ENCODE measurements at regions of chr9 and their contacts with region 1.

Region 1: GRCh38 chr9:110152704-110153374 is 55.1 kb downstream of the C9orf152 start:
- DNase-seq: peak; percentile 27
- ATAC-seq: peak; percentile 84
- H3K4me3 ChIP-seq: no peak overlapping the region
- H3K27ac ChIP-seq: no peak overlapping the region
- H3K4me1 ChIP-seq: peaks cover 0 to 9% of the 10 kb centered on the region in 2 experiments; a peak in 2 of 4 replicates
- H3K27me3 ChIP-seq: no peaks in the 10 kb centered on the region
- CTCF ChIP-seq: peak; percentile 67 to 78 (median 75)
- POLR2A ChIP-seq: no peak
- RAD21 ChIP-seq: peak; percentile 89

Region 2: GRCh38 chr9:109387206-109387605 is 765.6 kb before region 1 on chr9:
- CTCF ChIA-PET with region 1: no interaction called
- POLR2A ChIA-PET with region 1: no interaction called
- RAD21 ChIA-PET with region 1: no interaction called
- intact Hi-C with region 1: no loop called
- DNase-seq: no peak
- ATAC-seq: no peak
- H3K4me3 ChIP-seq: no peak overlapping the region
- H3K27ac ChIP-seq: no peak overlapping the region
- H3K4me1 ChIP-seq: no peaks in the 10 kb centered on the region
- H3K27me3 ChIP-seq: no peaks in the 10 kb centered on the region
- CTCF ChIP-seq: no peak
- POLR2A ChIP-seq: no peak
- RAD21 ChIP-seq: no peak

Region 3: DNA sequence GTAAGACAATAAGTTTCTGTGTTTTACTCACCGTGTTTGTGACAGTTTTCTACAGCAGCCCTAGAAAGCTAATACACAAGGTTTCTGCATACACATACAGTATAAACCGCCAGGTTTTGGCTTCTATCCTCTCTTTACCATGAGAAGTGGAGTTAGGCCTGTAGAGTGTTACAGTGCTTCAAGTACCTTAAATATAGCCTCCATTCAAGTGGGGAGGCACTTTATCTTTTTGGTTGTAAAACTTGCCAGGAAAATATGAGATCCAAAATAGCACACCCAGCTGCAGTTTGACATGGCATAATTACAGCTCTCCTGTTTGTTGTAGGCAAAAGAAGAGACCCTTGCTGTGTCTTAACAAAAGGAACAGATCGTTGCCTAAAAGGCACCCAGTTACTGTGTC is 564.4 kb before region 1 on chr9:
- CTCF ChIA-PET with region 1: no interaction called
- POLR2A ChIA-PET with region 1: no interaction called
- RAD21 ChIA-PET with region 1: no interaction called
- intact Hi-C with region 1: loop called (anchors 5 kb)
- DNase-seq: no peak
- ATAC-seq: no peak
- H3K4me3 ChIP-seq: no peak overlapping the region
- H3K27ac ChIP-seq: no peak overlapping the region
- H3K4me1 ChIP-seq: no peaks in the 10 kb centered on the region
- H3K27me3 ChIP-seq: no peaks in the 10 kb centered on the region
- CTCF ChIP-seq: no peak
- POLR2A ChIP-seq: no peak
- RAD21 ChIP-seq: no peak

Region 4: DNA sequence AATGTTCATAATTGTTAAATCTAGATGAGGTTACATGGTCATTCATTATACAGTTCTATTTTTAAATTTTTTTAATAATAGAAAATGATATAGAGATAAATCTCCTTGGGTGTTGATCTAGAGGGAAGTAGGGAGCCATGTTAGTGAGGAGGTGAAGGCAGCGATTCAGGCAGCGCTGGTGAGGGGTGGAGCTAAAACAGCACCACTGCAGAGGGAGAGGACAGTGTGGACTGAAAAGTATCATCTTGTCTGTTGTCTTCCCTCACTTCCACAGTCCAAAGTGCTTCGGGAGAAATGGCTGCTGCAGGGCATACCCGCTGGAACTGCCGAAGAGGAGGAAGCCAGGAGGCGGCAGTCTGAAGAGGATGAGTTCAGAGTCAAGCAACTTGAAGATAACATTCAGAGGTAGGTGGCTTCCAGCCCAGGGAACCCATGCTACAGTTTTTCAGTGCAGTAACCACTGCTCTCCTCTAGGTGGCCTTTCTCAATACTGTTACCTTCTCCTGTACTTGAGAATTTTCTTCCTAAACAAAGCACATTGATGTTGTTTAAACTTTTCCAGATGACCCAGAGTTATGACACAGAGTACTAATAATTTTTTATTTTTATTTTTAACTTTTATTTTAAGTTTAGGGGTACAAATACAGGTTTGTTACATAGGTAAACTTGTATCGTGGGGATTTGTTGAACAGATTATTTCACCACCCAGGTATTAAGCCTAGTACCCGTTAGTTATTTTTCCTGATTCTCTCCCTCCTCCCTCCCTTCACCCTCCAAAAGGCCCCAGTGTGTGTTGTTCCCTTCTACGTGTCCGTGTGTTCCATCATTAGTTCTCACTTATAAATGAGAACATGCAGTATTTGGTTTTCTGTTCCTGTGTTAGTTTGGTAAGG is 272.3 kb before region 1 on chr9:
- CTCF ChIA-PET with region 1: interaction called, 11 read pairs
- POLR2A ChIA-PET with region 1: no interaction called
- RAD21 ChIA-PET with region 1: no interaction called
- intact Hi-C with region 1: no loop called
- DNase-seq: peak; percentile 67
- ATAC-seq: peak; percentile 95
- H3K4me3 ChIP-seq: peak overlapping the region; percentile 36 to 40
- H3K27ac ChIP-seq: no peak overlapping the region
- H3K4me1 ChIP-seq: peaks cover 0 to 3% of the 10 kb centered on the region in 2 experiments; a peak in 1 of 4 replicates
- H3K27me3 ChIP-seq: peaks cover 17% of the 10 kb centered on the region
- CTCF ChIP-seq: peak; percentile 39 to 84 (median 68); a peak in 5 of 6 replicates
- POLR2A ChIP-seq: no peak
- RAD21 ChIP-seq: peak; percentile 36

Region 5: GRCh38 chr9:109903515-109904138 is 249.2 kb before region 1 on chr9:
- CTCF ChIA-PET with region 1: interaction called, 19 read pairs
- POLR2A ChIA-PET with region 1: no interaction called
- RAD21 ChIA-PET with region 1: interaction called, 3 to 10 read pairs
- intact Hi-C with region 1: loop called (anchors 1 kb)
- DNase-seq: peak; percentile 76
- ATAC-seq: peak; percentile 93
- H3K4me3 ChIP-seq: no peak overlapping the region
- H3K27ac ChIP-seq: no peak overlapping the region
- H3K4me1 ChIP-seq: no peaks in the 10 kb centered on the region
- H3K27me3 ChIP-seq: no peaks in the 10 kb centered on the region
- CTCF ChIP-seq: peak; percentile 70 to 91 (median 89)
- POLR2A ChIP-seq: no peak
- RAD21 ChIP-seq: peak; percentile 97

Region 6: DNA sequence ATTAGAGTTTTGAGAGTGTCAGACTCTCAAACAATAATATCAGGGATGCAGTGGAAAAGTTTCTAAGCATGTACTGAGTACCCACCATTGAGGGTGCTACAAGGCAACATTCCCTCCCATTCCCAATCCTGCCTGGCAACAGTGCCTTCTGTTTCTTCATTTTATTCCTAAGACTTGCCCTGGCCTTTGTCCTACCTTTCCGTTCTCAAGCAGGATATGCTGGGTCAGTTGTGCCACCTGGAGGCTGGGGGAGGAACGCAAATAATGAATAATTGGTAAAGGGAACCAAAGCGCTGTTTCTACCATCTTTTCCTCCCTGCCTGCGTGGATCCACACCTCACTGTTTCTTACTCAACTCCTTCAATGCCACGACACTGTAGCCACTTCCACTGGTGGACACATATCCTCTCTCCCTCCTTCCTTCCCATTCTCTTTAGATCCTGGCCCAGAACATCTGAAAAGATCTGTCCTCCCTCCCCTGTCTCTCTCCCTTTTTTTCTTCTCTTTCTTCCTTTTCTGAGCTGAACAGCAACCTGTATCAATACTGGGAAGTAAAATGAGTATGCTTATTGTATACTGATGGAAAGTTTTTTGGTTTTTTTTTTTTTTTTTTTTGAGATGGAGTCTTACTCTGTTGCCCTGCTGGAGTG is 94.4 kb before region 1 on chr9:
- CTCF ChIA-PET with region 1: no interaction called
- POLR2A ChIA-PET with region 1: no interaction called
- RAD21 ChIA-PET with region 1: interaction called in 1 of 2 experiments, 3 read pairs
- intact Hi-C with region 1: loop called (anchors 2 kb)
- DNase-seq: peak; percentile 67
- ATAC-seq: peak; percentile 96
- H3K4me3 ChIP-seq: no peak overlapping the region
- H3K27ac ChIP-seq: no peak overlapping the region
- H3K4me1 ChIP-seq: peaks cover 6 to 17% of the 10 kb centered on the region in 2 experiments; a peak in 3 of 4 replicates
- H3K27me3 ChIP-seq: no peaks in the 10 kb centered on the region
- CTCF ChIP-seq: peak; percentile 76 to 88 (median 77)
- POLR2A ChIP-seq: no peak
- RAD21 ChIP-seq: peak; percentile 96